Panc1 (cell line): ENCODE measurements at regions of chr1 and their contacts with region 1.

Region 1: DNA sequence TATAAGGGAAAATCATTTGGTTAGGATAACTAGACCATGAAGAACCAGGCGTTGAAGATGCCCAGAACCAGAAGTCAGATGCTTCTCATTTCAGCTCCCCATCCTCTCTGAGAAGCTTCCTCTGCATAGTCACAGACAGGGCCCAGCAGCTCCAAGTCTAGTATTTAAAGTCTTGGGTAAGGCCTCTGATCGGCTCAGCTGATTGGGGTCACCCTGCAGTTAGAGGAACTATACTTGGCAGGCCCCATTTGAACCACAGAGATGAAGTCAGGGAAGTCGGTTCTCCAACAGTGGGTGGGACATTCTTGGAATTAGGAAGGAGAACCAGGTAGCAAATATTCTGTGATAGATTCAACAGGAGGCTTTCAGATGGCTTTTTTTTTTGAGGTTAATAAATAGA is 48.3 kb downstream of the SLC22A15 start:
- DNase-seq: no peak
- ATAC-seq: no peak
- H3K4me3 ChIP-seq: no peak overlapping the region
- H3K27ac ChIP-seq: no peak overlapping the region
- H3K4me1 ChIP-seq: no peaks in the 10 kb centered on the region
- H3K27me3 ChIP-seq: no peaks in the 10 kb centered on the region
- CTCF ChIP-seq: no peak

Region 2: DNA sequence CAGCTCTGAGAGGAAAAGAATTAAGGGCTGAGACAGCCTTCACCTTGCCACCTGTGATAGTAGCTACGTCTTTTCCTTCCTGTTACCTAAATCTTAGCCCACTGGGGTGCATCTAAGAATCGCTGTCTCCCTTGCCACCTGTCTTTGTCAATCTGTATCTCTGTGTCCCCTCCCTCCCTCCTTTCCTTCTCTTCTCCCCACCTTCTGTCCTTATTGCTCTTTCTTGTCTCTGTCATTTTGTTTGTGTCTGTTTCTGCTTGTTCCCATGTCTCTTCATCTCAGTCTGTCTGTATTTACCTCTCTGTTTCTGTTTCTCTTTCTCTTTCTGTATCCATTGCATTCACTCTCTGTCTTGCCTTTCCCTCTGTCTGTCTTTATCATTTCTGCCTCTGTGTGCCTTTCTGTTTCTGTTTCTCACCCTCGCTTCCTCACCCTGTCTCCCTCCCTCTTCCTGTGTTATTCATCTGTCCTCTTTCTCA is 18.1 kb before region 1 on chr1:
- CTCF ChIA-PET with region 1: interaction called, 11 read pairs
- POLR2A ChIA-PET with region 1: no interaction called
- in situ Hi-C with region 1: no loop called
- intact Hi-C with region 1: no loop called
- DNase-seq: no peak
- ATAC-seq: no peak
- H3K4me3 ChIP-seq: no peak overlapping the region
- H3K27ac ChIP-seq: no peak overlapping the region
- H3K4me1 ChIP-seq: no peaks in the 10 kb centered on the region
- H3K27me3 ChIP-seq: no peaks in the 10 kb centered on the region
- CTCF ChIP-seq: no peak

Region 3: GRCh38 chr1:116044071-116044470 is 19.4 kb after region 1 on chr1:
- CTCF ChIA-PET with region 1: no interaction called
- POLR2A ChIA-PET with region 1: no interaction called
- in situ Hi-C with region 1: no loop called
- intact Hi-C with region 1: no loop called
- DNase-seq: no peak
- ATAC-seq: no peak
- H3K4me3 ChIP-seq: no peak overlapping the region
- H3K27ac ChIP-seq: no peak overlapping the region
- H3K4me1 ChIP-seq: no peaks in the 10 kb centered on the region
- H3K27me3 ChIP-seq: no peaks in the 10 kb centered on the region
- CTCF ChIP-seq: no peak